Mammary epithelial cell (primary cell): ENCODE measurements at regions of chr3 and their contacts with region 1.

Region 1: GRCh38 chr3:20511863-20512505 is 326.0 kb upstream of the SGO1 start:
- DNase-seq: peak; percentile 47
- H3K4me3 ChIP-seq: no peak overlapping the region
- H3K27ac ChIP-seq: no peak overlapping the region
- H3K4me1 ChIP-seq: no peaks in the 10 kb centered on the region
- H3K27me3 ChIP-seq: no peaks in the 10 kb centered on the region
- CTCF ChIP-seq: peak; percentile 55 to 70

Region 2: DNA sequence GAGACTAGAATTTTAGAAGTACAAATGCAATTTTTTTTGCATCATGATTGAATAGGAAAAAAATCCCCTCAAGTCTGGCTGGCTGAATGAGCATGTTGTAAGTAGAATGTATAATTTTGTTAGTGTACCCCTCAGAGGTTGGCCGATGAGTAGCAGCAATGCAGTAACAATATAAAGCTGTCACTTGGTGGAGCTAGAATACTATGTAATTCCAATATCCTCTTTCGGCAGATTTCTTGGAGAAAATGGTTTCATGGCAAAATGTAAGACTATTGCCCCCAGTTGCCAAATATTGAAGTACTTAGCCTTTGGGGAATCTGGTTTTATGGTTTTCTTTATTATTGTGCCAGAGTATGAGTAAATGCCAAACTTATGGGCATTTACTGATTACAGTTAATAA is 286.2 kb before region 1 on chr3:
- CTCF ChIA-PET with region 1: interaction called, 4 read pairs
- dilution Hi-C with region 1: no loop called
- in situ Hi-C with region 1: no loop called
- intact Hi-C with region 1: loop called (anchors 5 kb)
- DNase-seq: peak; percentile 26
- H3K4me3 ChIP-seq: no peak overlapping the region
- H3K27ac ChIP-seq: no peak overlapping the region
- H3K4me1 ChIP-seq: no peaks in the 10 kb centered on the region
- H3K27me3 ChIP-seq: peaks cover 3% of the 10 kb centered on the region
- CTCF ChIP-seq: peak; percentile 49 to 53

Region 3: DNA sequence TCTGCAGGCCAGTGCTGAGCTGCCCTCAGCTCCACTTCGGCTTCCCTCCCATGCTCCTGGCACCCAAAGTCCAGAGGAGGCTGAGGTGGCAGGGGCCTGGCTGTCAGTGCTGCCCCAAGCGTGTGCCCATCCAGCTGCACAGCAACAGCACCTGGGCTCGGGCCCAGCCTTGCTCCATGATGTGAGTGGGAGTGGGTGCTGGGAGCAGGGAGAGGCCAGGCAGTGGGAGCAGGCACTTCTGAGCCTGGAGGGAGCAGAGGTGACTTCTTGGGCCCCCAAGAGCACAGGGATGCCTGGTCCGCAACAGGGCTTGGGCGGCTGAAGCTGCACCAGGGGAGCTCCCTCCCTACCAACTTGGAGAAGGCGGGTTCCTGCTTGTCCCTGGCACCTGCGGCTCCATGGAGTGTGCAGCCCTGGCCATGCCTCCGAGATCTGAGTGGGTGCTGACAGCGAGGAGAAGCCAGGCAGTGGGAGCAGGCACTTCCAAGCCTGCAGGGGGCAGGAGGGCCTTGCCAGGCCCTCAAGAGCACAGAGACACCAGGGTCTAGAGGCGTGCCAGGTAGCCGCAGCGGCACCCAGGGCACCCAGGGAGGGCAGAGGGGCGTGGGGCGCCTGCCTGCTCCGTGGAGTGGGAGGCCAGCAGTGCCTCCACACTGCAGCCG is 40.8 kb after region 1 on chr3:
- CTCF ChIA-PET with region 1: no interaction called
- dilution Hi-C with region 1: no loop called
- in situ Hi-C with region 1: no loop called
- intact Hi-C with region 1: no loop called
- DNase-seq: no peak
- H3K4me3 ChIP-seq: no peak overlapping the region
- H3K27ac ChIP-seq: no peak overlapping the region
- H3K4me1 ChIP-seq: no peaks in the 10 kb centered on the region
- H3K27me3 ChIP-seq: no peaks in the 10 kb centered on the region
- CTCF ChIP-seq: no peak

Region 4: DNA sequence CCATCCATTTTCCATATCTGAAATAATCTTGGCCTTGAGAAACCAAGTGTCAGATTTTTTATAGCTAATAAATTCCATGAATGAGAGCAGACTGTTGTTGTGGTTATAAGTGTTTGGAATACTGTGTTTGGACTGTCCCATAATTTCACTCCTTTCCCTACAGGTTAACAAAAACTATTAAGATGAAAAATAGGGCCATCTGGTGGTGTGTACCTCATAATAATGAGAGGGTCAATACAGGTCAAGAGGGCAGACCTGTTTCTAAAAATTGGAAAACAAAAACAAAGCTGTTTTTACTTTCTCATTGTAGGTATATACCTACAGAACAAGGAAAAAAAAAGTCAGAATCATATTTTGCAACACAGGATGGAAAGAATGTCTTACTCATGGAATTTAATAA is 227.8 kb after region 1 on chr3:
- CTCF ChIA-PET with region 1: no interaction called
- dilution Hi-C with region 1: no loop called
- in situ Hi-C with region 1: no loop called
- intact Hi-C with region 1: loop called (anchors 10 kb)
- DNase-seq: no peak
- H3K4me3 ChIP-seq: no peak overlapping the region
- H3K27ac ChIP-seq: no peak overlapping the region
- H3K4me1 ChIP-seq: no peaks in the 10 kb centered on the region
- H3K27me3 ChIP-seq: no peaks in the 10 kb centered on the region
- CTCF ChIP-seq: no peak

Region 5: DNA sequence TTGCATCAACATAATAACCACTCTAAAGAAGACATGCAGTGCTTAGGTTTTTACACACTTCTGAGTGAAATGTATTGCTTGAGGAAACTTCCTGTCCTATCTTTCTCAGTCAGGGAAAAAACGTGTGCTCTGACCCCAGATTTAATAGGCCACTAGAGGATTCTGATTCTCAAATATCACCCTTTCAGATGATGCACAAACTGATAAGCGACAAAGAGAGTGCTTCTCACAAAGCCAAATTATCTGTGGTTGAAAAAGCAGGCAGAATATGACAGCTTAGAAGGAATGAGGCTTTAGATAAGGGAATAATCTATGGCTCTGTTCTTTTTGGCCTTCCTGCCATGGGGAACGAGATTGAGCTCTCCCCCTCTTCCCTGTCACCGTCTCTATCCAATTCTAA is 257.4 kb after region 1 on chr3:
- CTCF ChIA-PET with region 1: no interaction called
- dilution Hi-C with region 1: no loop called
- in situ Hi-C with region 1: no loop called
- intact Hi-C with region 1: no loop called
- DNase-seq: no peak
- H3K4me3 ChIP-seq: no peak overlapping the region
- H3K27ac ChIP-seq: no peak overlapping the region
- H3K4me1 ChIP-seq: no peaks in the 10 kb centered on the region
- H3K27me3 ChIP-seq: no peaks in the 10 kb centered on the region
- CTCF ChIP-seq: no peak

Region 6: GRCh38 chr3:20930034-20930433 is 418.1 kb after region 1 on chr3:
- CTCF ChIA-PET with region 1: no interaction called
- dilution Hi-C with region 1: no loop called
- in situ Hi-C with region 1: no loop called
- intact Hi-C with region 1: loop called (anchors 1 kb)
- DNase-seq: peak; percentile 23
- H3K4me3 ChIP-seq: no peak overlapping the region
- H3K27ac ChIP-seq: no peak overlapping the region
- H3K4me1 ChIP-seq: no peaks in the 10 kb centered on the region
- H3K27me3 ChIP-seq: no peaks in the 10 kb centered on the region
- CTCF ChIP-seq: peak; percentile 13 to 35

Region 7: DNA sequence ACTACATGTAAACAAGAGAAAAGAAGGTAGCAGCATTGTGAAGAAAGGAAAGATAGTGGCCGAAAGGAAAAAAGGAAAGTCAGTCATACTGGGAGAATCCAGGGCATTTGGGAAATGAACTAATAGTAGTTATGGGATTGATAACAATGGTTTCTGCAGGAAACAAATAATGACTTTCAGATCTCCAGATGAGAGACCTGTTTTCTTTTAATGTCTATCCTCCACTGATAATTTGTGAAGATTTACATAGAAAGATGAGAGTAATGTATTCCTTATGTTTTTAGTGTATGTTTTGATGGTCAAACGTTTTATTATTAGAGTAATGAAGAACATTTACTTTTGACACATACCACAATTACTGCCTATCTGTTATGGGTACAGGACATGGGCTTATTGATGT is 1254.0 kb after region 1 on chr3:
- CTCF ChIA-PET with region 1: no interaction called
- dilution Hi-C with region 1: no loop called
- in situ Hi-C with region 1: no loop called
- intact Hi-C with region 1: loop called (anchors 5 kb)
- DNase-seq: no peak
- H3K4me3 ChIP-seq: no peak overlapping the region
- H3K27ac ChIP-seq: no peak overlapping the region
- H3K4me1 ChIP-seq: no peaks in the 10 kb centered on the region
- H3K27me3 ChIP-seq: no peaks in the 10 kb centered on the region
- CTCF ChIP-seq: no peak

Region 8: DNA sequence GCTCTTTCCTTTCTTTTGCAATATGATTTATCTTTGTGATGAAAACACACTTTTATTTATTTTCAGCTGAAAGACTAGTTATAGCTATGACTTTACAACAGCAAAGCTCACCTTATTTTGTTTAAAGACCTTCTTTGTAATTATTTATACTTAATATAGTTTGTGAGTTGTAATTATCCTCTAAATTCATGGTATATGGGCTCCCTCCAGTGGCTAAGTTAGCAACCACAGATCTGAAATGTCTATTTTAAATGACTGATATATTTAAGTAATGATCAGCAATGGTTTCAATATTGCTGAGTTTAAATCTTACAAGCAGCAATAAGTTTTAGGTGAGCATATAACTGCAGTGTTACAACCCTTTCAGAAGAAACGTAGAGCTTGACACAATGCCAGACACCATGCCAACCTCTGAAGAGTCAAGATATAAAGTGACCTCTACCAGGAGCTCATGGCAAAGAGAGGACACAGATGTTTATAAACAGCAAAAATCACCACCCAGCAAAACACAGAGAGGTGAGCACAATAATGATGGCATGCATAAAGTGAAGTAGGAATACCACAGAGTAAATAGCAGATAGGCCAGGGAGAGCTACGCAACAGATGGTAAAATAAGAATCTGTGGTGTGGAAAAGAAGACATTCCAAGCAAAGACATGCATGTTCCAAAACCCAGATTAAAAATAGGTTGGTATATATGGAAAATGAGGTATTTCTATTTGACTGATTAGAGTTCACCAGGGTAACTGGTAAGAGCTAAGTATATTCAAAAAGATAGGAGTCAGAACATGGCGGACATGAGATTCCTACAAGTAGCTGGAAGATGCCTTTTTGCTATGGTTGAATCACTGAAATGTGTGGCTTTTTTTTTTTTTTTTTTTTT is 1382.7 kb after region 1 on chr3:
- CTCF ChIA-PET with region 1: no interaction called
- dilution Hi-C with region 1: no loop called
- in situ Hi-C with region 1: loop called (anchors 10 kb)
- intact Hi-C with region 1: no loop called
- DNase-seq: no peak
- H3K4me3 ChIP-seq: no peak overlapping the region
- H3K27ac ChIP-seq: no peak overlapping the region
- H3K4me1 ChIP-seq: no peaks in the 10 kb centered on the region
- H3K27me3 ChIP-seq: no peaks in the 10 kb centered on the region
- CTCF ChIP-seq: peak; percentile 59